Esophagus squamous epithelium (tissue), 5 donors: ENCODE measurements at regions of chr3 and their contacts with region 1.

Region 1: DNA sequence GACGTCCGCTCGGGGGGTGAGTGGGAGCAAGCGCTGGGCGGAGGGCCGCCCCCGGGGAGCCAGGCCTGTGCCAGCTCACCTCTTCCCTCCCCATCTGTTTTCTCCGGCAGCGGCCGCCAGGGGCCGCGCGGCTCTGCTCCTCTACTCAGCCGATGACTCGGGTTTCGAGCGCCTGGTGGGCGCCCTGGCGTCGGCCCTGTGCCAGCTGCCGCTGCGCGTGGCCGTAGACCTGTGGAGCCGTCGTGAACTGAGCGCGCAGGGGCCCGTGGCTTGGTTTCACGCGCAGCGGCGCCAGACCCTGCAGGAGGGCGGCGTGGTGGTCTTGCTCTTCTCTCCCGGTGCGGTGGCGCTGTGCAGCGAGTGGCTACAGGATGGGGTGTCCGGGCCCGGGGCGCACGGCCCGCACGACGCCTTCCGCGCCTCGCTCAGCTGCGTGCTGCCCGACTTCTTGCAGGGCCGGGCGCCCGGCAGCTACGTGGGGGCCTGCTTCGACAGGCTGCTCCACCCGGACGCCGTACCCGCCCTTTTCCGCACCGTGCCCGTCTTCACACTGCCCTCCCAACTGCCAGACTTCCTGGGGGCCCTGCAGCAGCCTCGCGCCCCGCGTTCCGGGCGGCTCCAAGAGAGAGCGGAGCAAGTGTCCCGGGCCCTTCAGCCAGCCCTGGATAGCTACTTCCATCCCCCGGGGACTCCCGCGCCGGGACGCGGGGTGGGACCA is 632 bp upstream of the CRELD1 start:
- DNase-seq: peak; percentile 40
- H3K4me3 ChIP-seq: peak overlapping the region; percentile 59 to 91 (median 81)
- H3K27ac ChIP-seq: peak overlapping the region; percentile 95 to 99 (median 97)
- H3K4me1 ChIP-seq: peaks cover 13 to 42% (median 29%) of the 10 kb centered on the region in 3 donors
- H3K27me3 ChIP-seq: no peaks in the 10 kb centered on the region
- CTCF ChIP-seq: peak; percentile 64 to 91 (median 79)
- POLR2A ChIP-seq: peak in 1 of 4 donors; percentile 12

Region 2: DNA sequence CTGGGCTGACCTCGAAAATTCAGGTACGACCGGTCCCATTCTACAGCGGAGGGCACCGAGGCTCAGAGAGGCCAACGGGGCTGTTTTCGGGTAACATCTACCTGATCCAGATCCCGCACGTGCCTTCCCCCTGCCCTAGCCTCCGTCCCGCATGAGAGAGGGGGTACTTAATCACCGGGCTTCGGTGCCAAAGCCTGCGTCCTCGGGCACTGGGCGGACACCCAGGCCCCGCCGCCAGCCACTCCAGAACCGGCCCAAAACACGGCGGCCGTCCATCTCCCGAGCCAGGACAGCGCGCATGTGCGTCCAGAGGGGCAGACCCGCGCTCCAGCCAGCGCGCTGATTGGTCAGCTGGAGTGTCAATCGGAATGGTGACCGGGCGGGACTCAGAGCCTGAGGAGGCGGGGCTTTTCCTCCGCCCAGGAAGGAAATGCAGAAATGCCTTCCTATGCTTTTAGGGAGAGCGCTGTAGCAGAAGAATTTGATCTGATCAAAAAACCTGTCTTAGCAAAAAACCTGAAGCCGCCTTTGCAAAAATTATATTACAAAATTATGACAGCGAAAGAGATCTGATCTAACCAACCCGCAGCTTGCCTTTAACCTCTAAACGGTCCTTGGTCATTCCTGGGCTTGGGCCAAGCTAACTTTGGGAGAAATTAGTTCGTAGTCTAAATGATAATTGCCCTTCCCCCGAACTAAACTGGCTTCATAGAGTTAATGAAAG is 89.1 kb before region 1 on chr3 and contains the start of gene RPUSD3:
- intact Hi-C with region 1: loop called (anchors 5 kb)
- DNase-seq: peak; percentile 82
- H3K4me3 ChIP-seq: peak within 1 kb of the TSS; percentile 71 to 74 (median 72)
- H3K27ac ChIP-seq: peak within 1 kb of the TSS; percentile 83 to 91 (median 90)
- H3K4me1 ChIP-seq: peaks cover 0 to 27% (median 15%) of the 10 kb centered on the region in 3 donors
- H3K27me3 ChIP-seq: no peaks in the 10 kb centered on the region
- CTCF ChIP-seq: no peak
- POLR2A ChIP-seq: peak in 3 of 4 donors; percentile 11 to 69 (median 50)
- total RNA-seq, gene RPUSD3: 34.7 to 46.4 (median 41.4) TPM

Region 3: GRCh38 chr3:10115326-10116137 is 182.5 kb after region 1 on chr3 and contains the start of gene BRK1:
- intact Hi-C with region 1: no loop called
- DNase-seq: peak; percentile 80
- H3K4me3 ChIP-seq: peak within 1 kb of the TSS; percentile 54 to 90 (median 76)
- H3K27ac ChIP-seq: peak within 1 kb of the TSS; percentile 73 to 90 (median 86)
- H3K4me1 ChIP-seq: peaks cover 8 to 34% (median 15%) of the 10 kb centered on the region in 3 donors
- H3K27me3 ChIP-seq: no peaks in the 10 kb centered on the region
- CTCF ChIP-seq: peak in 1 of 6 experiments; percentile 34
- POLR2A ChIP-seq: peak in 3 of 4 donors; percentile 78 to 88 (median 87)
- total RNA-seq, gene BRK1: 52.0 to 134 (median 100) TPM

Region 4: DNA sequence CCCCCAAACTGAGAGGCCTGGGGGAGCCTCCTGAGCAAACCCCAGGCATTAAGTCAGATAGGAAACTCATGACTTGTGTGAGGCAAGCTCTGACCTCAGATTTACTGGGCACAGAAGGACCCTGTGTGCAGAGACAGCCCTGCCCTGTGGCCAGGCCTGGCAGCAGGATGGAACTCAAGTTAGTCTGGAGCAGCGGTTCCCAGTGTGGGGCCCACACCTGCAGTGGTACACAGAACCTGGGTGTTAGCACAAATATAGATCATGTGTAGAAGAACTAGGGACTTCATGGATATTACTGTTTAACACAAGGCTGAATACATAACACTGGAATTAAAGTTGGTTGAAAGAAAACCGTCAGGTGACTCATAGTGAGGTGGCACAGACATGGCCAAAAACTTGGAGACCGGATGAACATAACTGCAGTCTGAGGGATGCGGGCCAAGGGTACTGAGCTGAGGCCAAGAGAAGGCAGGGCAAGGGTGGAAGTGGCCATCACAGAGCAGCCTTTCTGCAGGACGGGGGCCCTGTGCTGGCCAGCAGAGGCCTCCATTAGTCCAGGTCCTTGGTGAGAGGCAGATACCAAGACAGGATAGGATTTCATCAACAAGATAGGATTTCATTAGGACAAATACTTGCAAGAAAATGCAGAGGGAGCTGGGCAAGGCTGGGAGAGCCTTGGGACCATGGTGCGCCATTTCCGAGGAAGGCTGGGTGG is 272.6 kb after region 1 on chr3:
- intact Hi-C with region 1: no loop called
- DNase-seq: no peak
- H3K4me3 ChIP-seq: no peak overlapping the region
- H3K27ac ChIP-seq: peak overlapping the region; percentile 48 to 81 (median 76)
- H3K4me1 ChIP-seq: peaks cover 21 to 49% (median 33%) of the 10 kb centered on the region in 3 donors
- H3K27me3 ChIP-seq: no peaks in the 10 kb centered on the region
- CTCF ChIP-seq: no peak
- POLR2A ChIP-seq: no peak